Activated CD4-positive, alpha-beta T cell treated with anti-CD3 and anti-CD28 coated beads for 36 hours (primary cell): ENCODE measurements at regions of chr4 and their contacts with region 1.

Region 1: DNA sequence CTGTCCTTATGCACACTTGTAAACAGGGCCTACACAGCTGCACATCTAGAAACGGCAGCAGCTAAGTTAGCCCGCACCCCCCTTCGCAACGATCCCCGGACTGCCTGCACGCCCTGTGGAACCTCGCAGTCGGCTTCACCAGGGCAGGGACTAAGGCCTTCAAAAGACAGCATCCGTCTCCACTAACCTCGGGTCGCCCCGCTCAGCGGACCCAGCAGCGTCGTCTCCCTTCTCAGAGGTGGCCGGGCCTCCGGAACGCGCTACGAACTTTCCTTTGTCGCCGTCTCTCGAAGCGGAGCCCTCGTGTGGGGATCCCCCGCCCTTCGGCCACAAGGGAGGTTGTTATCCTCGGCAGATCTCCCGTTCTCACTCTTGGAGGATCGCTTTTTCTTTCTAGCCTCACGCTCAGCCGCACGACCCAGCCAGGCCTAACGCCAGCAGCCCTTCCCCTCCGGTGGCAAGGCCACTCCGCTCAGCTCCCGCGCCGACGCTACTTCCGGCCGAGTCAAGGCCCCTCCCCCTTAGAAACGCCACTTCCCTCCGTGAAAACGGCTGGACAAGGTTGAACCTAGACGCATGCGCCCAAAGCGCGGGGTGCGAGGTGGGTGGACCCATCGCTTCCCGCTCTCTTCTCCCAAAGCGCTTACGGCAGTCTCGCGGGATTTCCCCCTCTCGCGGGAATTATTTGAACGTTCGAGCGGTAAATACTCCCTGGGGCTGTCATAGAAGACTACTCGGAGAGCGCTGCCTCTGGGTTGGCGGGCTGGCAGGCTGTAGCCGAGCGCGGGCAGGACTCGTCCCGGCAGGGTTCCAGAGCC is at the starts of genes DCAF16 and NCAPG:
- DNase-seq: peak; percentile 99
- ATAC-seq: peak; percentile 91
- H3K4me3 Mint-ChIP-seq: peak within 1 kb of the TSS; percentile 98
- H3K27ac Mint-ChIP-seq: peak within 1 kb of the TSS; percentile 100
- H3K4me1 Mint-ChIP-seq: peaks cover 42% of the 10 kb centered on the region
- H3K27me3 Mint-ChIP-seq: no peaks in the 10 kb centered on the region
- total RNA-seq, gene DCAF16: 40.3 to 47.5 TPM
- total RNA-seq, gene NCAPG: 73.8 to 82.8 TPM

Region 2: DNA sequence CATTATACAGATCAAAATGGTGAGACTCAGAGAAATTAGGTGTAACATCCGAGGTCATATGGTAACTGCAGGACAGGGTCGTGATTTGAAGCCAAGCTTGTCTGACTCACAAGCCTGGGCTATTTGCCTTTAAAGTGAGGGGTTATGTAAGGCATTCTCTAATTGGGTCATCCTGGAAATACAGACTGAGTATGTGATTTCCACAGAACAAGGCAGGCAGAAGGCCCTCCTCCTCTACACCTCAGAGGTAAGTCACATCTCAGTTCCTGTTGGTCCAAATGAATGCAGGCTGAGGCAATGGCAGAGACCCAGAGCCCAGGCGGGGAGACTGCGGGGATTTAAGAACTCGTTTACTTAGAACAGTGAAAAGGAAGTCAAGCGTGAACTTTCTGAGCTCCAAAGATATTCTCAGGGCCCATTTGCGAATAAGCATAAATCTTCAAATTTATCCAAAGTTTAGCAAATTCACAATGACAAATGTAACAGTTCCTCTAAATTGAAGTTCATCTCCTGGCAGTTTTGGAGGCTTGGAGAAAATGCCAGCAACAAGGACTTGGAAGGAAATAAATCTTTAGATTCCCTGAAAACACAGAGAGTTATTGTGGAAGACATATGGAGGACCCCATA is 1065.3 kb before region 1 on chr4:
- CTCF ChIA-PET with region 1: no interaction called
- POLR2A ChIA-PET with region 1: no interaction called
- intact Hi-C with region 1: no loop called
- DNase-seq: no peak
- ATAC-seq: no peak
- H3K4me3 Mint-ChIP-seq: no peak overlapping the region
- H3K27ac Mint-ChIP-seq: no peak overlapping the region
- H3K4me1 Mint-ChIP-seq: no peaks in the 10 kb centered on the region
- H3K27me3 Mint-ChIP-seq: no peaks in the 10 kb centered on the region

Region 3: DNA sequence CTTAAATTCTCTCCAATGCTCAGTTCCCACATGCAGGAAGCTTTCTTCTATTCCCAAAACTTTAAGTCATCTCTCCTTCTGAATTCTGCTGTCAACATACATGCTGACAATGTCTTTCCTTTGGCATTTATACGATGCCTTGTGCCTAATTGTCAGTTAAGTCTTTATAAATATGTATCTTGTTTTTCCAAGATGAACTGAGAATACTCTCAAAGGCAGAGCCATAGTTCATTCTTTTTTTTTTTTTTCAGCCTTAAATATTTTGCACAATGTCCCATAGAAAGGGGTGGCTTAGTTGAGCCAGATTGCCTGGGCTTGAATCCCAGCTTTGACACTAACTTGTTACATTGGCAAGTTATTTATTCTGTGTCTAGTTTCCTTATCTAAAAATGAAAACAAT is 509.2 kb before region 1 on chr4:
- CTCF ChIA-PET with region 1: no interaction called
- POLR2A ChIA-PET with region 1: no interaction called
- intact Hi-C with region 1: no loop called
- DNase-seq: no peak
- ATAC-seq: no peak
- H3K4me3 Mint-ChIP-seq: no peak overlapping the region
- H3K27ac Mint-ChIP-seq: no peak overlapping the region
- H3K4me1 Mint-ChIP-seq: no peaks in the 10 kb centered on the region
- H3K27me3 Mint-ChIP-seq: peaks cover 19% of the 10 kb centered on the region

Region 4: DNA sequence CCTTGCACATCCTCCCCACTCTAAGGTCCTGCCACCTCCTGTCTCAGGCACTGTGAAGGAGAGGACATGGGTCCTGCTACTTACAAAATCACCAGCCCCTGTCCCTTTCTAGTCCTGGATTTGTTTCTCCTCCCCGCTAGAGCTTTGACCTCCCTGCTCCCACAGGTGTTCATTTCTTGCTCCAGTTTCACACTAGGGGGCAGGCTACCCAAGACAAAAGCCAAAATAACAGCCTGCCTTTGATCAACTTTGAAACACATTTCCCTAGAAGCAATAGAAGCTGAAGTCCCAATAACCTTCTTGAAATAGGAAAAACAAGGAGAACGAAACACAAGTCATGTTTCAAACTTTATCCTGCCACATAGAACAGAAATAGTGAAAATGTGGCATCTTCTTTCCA is 463.0 kb before region 1 on chr4:
- CTCF ChIA-PET with region 1: no interaction called
- POLR2A ChIA-PET with region 1: no interaction called
- intact Hi-C with region 1: loop called in 1 of 2 experiments (anchors 10 kb)
- DNase-seq: peak; percentile 51
- ATAC-seq: peak; percentile 30
- H3K4me3 Mint-ChIP-seq: no peak overlapping the region
- H3K27ac Mint-ChIP-seq: no peak overlapping the region
- H3K4me1 Mint-ChIP-seq: no peaks in the 10 kb centered on the region
- H3K27me3 Mint-ChIP-seq: no peaks in the 10 kb centered on the region

Region 5: DNA sequence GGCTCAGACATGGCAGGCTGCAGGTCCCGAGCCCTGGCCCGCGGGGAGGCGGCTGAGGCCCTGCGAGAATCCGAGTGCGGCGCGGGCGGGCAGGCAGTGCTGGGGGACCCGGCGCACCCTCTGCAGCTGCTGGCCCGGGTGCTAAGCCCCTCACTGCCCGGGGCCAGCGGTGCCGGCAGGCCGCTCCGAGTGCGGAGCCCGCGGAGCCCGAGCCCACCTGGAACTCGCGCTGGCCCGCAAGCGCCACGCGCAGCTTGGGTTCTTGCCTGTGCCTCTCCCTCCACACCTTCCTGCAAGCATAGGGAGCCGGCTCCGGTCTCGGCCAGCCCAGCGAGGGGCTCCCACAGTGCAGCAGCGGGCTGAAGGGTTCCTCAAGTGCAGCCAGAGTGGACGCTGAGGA is 396.1 kb before region 1 on chr4:
- CTCF ChIA-PET with region 1: no interaction called
- POLR2A ChIA-PET with region 1: no interaction called
- intact Hi-C with region 1: no loop called
- DNase-seq: no peak
- ATAC-seq: no peak
- H3K4me3 Mint-ChIP-seq: no peak overlapping the region
- H3K27ac Mint-ChIP-seq: no peak overlapping the region
- H3K4me1 Mint-ChIP-seq: no peaks in the 10 kb centered on the region
- H3K27me3 Mint-ChIP-seq: peaks cover 6% of the 10 kb centered on the region

Region 6: GRCh38 chr4:17544205-17544604 is 266.3 kb before region 1 on chr4:
- CTCF ChIA-PET with region 1: interaction called, 9 read pairs
- POLR2A ChIA-PET with region 1: no interaction called
- intact Hi-C with region 1: loop called (anchors 1 kb)
- DNase-seq: no peak
- ATAC-seq: no peak
- H3K4me3 Mint-ChIP-seq: no peak overlapping the region
- H3K27ac Mint-ChIP-seq: no peak overlapping the region
- H3K4me1 Mint-ChIP-seq: no peaks in the 10 kb centered on the region
- H3K27me3 Mint-ChIP-seq: peaks cover 15% of the 10 kb centered on the region

Region 7: GRCh38 chr4:17614416-17615299 is 195.8 kb before region 1 on chr4 and contains the start of gene MED28:
- CTCF ChIA-PET with region 1: interaction called, 4 read pairs
- POLR2A ChIA-PET with region 1: interaction called, 5 read pairs
- intact Hi-C with region 1: loop called (anchors 1 kb)
- DNase-seq: peak; percentile 98
- ATAC-seq: peak; percentile 89
- H3K4me3 Mint-ChIP-seq: peak within 1 kb of the TSS; percentile 98
- H3K27ac Mint-ChIP-seq: peak within 1 kb of the TSS; percentile 97
- H3K4me1 Mint-ChIP-seq: peaks cover 45% of the 10 kb centered on the region
- H3K27me3 Mint-ChIP-seq: no peaks in the 10 kb centered on the region
- total RNA-seq, gene MED28: 43.0 to 58.0 TPM

Region 8: DNA sequence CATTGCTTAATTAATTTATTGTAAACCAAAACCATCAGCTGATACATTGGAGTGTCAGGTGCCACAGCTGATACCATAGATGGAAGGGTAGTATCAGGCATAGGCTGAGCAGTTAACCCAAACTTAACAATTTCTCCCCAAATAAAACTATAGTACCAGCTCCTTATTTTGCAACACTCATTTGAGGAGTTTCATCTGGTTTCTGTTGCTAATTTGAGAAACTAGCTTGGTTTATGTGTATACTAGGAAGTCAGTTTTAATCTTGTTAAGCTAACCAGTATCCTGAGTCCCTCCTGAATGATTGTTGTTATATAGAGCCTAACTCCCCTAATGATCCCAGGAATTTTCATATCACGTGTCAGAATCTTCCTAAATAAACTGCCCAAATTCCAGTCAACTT is 12.7 kb before region 1 on chr4:
- CTCF ChIA-PET with region 1: interaction called, 18 read pairs
- POLR2A ChIA-PET with region 1: interaction called, 8 read pairs
- intact Hi-C with region 1: no loop called
- DNase-seq: no peak
- ATAC-seq: peak; percentile 47
- H3K4me3 Mint-ChIP-seq: no peak overlapping the region
- H3K27ac Mint-ChIP-seq: no peak overlapping the region
- H3K4me1 Mint-ChIP-seq: peaks cover 5% of the 10 kb centered on the region
- H3K27me3 Mint-ChIP-seq: no peaks in the 10 kb centered on the region

Region 9: GRCh38 chr4:19592391-19592790 is 1781.9 kb after region 1 on chr4:
- CTCF ChIA-PET with region 1: no interaction called
- POLR2A ChIA-PET with region 1: no interaction called
- intact Hi-C with region 1: no loop called
- DNase-seq: no peak
- ATAC-seq: no peak
- H3K4me3 Mint-ChIP-seq: no peak overlapping the region
- H3K27ac Mint-ChIP-seq: no peak overlapping the region
- H3K4me1 Mint-ChIP-seq: no peaks in the 10 kb centered on the region
- H3K27me3 Mint-ChIP-seq: no peaks in the 10 kb centered on the region